Left ventricle myocardium superior (tissue), 1 donor: ENCODE measurements at regions of chr19 and their contacts with region 1.

Region 1: DNA sequence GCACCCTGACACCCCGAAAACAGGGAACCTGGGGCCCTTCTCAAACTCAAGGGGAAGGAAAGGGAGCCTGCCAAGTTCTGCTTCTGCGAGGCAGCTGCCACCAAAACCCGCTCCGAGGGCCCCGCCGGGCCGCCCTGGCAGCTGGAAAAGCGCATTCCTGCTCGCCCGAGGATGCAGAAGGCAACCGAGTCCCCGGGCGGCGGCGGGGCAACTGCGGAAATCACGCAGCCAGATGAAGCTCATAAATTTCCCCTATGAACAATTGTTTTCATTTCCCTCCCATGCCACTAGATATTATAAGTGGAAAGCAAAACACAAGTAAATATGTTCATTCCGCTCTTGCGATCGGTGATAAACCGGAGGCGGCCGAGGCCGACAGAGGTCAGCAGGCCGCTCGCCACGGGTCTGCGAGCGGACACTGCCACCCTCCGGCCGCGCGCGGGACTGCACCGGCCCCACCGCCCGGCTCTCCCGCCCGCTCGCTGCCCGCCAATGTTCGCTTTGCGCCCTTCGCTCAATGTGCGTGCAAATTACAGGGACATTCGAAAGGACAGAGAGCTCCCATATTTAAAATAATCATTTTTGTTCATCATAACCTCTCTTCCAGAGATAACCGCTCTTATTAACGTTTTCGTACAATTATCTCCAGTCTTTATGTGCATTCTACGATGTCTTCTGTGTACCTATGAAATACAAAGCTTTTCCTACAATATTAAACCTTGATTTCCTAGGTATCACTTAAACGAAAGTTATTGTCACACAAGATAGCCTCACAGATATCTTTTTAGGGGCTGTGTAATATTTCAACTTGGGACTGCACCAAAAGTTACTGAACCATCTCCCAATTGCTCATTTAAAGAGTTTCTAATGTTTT is 120.8 kb upstream of the ZNF507 start:
- DNase-seq: peak; percentile 80
- ATAC-seq: peak; percentile 95

Region 2: GRCh38 chr19:30682999-30683536 is 1541.5 kb before region 1 on chr19:
- intact Hi-C with region 1: loop called (anchors 5 kb)
- DNase-seq: peak; percentile 80
- ATAC-seq: peak; percentile 84